PC-9 (cell line): ENCODE measurements at regions of chr15 and their contacts with region 1.

Region 1: DNA sequence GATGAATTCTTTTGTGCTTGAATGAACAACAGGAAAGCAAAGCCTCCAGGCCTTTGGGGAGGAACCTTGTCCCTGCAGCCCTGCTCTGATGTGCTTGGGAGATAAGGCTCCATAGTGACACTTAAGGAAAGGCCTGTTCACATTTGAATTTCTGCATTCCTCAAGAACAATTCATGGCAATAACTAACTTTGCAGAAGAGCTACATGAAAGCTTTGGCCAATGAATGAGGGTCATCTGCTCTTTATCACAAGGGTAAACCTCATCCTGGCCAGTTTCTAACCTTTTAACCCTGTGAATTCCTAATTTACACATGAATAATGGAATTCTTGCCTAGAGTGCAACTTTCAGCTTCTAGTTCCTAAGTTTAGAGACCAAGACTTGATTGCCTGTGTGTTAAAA is 5.6 kb downstream of the PRTG start:
- DNase-seq: peak; percentile 63 to 88
- H3K4me3 ChIP-seq: no peak overlapping the region
- H3K27ac ChIP-seq: peak overlapping the region; percentile 47
- H3K4me1 ChIP-seq: peaks cover 34% of the 10 kb centered on the region
- H3K27me3 ChIP-seq: no peaks in the 10 kb centered on the region
- CTCF ChIP-seq: no peak

Region 2: GRCh38 chr15:55703873-55704285 is 33.5 kb before region 1 on chr15:
- CTCF ChIA-PET with region 1: no interaction called
- POLR2A ChIA-PET with region 1: interaction called, 20 read pairs
- intact Hi-C with region 1: no loop called
- DNase-seq: peak in 1 of 2 experiments; percentile 59
- H3K4me3 ChIP-seq: no peak overlapping the region
- H3K27ac ChIP-seq: peak overlapping the region; percentile 43
- H3K4me1 ChIP-seq: 0 out of 2 replicates have a peak, but pooled peaks cover 8% of the 10 kb centered on the region
- H3K27me3 ChIP-seq: no peaks in the 10 kb centered on the region
- CTCF ChIP-seq: no peak

Region 3: DNA sequence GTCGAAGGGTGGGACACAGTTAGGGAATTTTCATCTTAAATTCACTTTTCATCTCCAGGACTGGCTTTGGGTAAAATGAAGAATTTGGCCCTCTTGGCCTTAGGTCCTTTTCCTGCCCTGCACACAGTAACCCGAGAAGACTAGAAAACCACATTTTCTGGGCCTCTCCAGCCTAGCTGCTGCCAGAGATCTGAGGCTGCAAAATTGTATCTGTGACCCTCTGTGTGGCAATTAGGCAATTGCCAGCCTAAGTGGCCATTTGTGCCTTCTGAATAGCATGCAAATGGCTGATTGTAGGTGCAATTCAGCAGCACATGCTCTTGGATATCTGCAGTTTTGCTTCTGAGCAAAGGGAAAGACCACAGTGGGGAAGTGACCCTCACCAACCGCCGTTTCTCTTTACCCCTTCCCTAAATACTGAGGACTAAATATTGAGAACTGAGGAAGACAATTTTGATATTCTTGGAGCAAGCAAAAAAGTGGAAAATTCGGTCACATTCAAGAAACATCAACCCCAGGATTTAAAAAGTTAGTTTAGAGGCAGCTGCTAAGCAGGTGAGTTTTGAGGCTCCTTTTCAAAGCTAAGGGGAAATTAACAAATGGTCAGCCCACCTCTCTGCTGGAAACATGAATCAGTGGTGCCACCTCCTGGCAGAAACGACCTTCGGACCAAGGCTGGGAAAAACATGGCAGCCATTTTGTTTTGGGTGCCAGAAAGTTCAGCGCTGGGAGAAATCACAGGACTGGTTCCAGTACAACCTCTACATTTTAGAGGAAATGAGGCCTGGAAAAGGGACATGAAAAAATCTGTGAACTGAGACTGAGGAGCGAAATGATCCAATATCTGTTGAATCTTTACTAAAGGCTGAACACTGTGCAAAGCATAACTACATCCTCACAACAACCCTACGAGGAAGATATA is 62.2 kb after region 1 on chr15:
- CTCF ChIA-PET with region 1: interaction called, 10 read pairs
- POLR2A ChIA-PET with region 1: no interaction called
- intact Hi-C with region 1: loop called (anchors 5 kb)
- DNase-seq: peak in 1 of 2 experiments; percentile 57
- H3K4me3 ChIP-seq: no peak overlapping the region
- H3K27ac ChIP-seq: no peak overlapping the region
- H3K4me1 ChIP-seq: peaks cover 16% of the 10 kb centered on the region
- H3K27me3 ChIP-seq: no peaks in the 10 kb centered on the region
- CTCF ChIP-seq: peak; percentile 69

Region 4: GRCh38 chr15:56058986-56059385 is 321.6 kb after region 1 on chr15:
- CTCF ChIA-PET with region 1: no interaction called
- POLR2A ChIA-PET with region 1: no interaction called
- intact Hi-C with region 1: loop called (anchors 1 kb)
- DNase-seq: no peak
- H3K4me3 ChIP-seq: no peak overlapping the region
- H3K27ac ChIP-seq: peak overlapping the region; percentile 84; the same call in 1 of the 2 replicates
- H3K4me1 ChIP-seq: peaks cover 28% of the 10 kb centered on the region
- H3K27me3 ChIP-seq: no peaks in the 10 kb centered on the region
- CTCF ChIP-seq: no peak